ENCODE measurements at regions of chr3 and their contacts with region 1.

Region 1: GRCh38 chr3:136752422-136753325 is 496 bp upstream of the STAG1 start:
- DNase-seq: peak; percentile 99
- ATAC-seq: peak; percentile 90
- H3K4me3 Mint-ChIP-seq: peak overlapping the region; percentile 73
- H3K27ac Mint-ChIP-seq: peak overlapping the region; percentile 86
- H3K4me1 Mint-ChIP-seq: peaks cover 36% of the 10 kb centered on the region
- H3K27me3 Mint-ChIP-seq: no peaks in the 10 kb centered on the region

Region 2: GRCh38 chr3:135655328-135655727 is 1097.3 kb before region 1 on chr3:
- CTCF ChIA-PET with region 1: no interaction called
- POLR2A ChIA-PET with region 1: no interaction called
- DNase-seq: no peak
- ATAC-seq: no peak
- H3K4me3 Mint-ChIP-seq: no peak overlapping the region
- H3K27ac Mint-ChIP-seq: no peak overlapping the region
- H3K4me1 Mint-ChIP-seq: no peaks in the 10 kb centered on the region
- H3K27me3 Mint-ChIP-seq: no peaks in the 10 kb centered on the region

Region 3: DNA sequence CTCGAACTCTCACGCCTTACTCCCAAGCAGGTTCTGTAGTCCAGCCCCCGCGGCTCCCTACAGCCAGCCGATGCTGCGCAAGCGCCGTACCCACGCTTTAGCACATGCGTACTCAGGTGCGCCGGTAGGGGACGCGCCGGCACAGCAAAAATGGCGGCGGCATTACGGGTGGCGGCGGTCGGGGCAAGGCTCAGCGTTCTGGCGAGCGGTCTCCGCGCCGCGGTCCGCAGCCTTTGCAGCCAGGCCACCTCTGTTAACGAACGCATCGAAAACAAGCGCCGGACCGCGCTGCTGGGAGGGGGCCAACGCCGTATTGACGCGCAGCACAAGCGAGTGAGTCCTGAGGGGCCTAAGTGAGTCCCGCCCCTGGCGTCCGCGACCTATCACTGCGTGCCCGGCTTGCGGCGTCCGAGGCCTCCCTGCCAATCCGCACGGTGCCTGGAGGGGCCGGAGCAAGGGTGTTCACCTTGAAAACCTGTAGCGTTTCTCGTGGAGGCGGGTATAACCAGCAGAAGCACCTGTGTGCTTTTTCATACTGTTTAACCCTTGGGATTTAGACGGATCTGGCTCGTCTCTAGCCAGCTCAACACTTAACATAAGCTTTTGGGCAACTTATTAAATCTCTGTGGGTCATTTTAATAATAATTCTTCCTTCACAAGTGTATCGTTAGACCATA is 502.3 kb before region 1 on chr3 and contains the start of gene PCCB:
- CTCF ChIA-PET with region 1: interaction called, 11 read pairs
- POLR2A ChIA-PET with region 1: interaction called, 3 read pairs
- DNase-seq: peak; percentile 95
- ATAC-seq: peak; percentile 100
- H3K4me3 Mint-ChIP-seq: peak within 1 kb of the TSS; percentile 91
- H3K27ac Mint-ChIP-seq: peak within 1 kb of the TSS; percentile 94
- H3K4me1 Mint-ChIP-seq: peaks cover 26% of the 10 kb centered on the region
- H3K27me3 Mint-ChIP-seq: no peaks in the 10 kb centered on the region
- total RNA-seq, gene PCCB: 22.5 to 23.7 TPM

Region 4: GRCh38 chr3:136385457-136385856 is 367.2 kb before region 1 on chr3:
- CTCF ChIA-PET with region 1: interaction called, 46 read pairs
- POLR2A ChIA-PET with region 1: no interaction called
- DNase-seq: no peak
- ATAC-seq: peak; percentile 33
- H3K4me3 Mint-ChIP-seq: no peak overlapping the region
- H3K27ac Mint-ChIP-seq: peak overlapping the region; percentile 20
- H3K4me1 Mint-ChIP-seq: peaks cover 4% of the 10 kb centered on the region
- H3K27me3 Mint-ChIP-seq: no peaks in the 10 kb centered on the region

Region 5: GRCh38 chr3:136630915-136631314 is 121.8 kb before region 1 on chr3:
- CTCF ChIA-PET with region 1: no interaction called
- POLR2A ChIA-PET with region 1: no interaction called
- DNase-seq: no peak
- ATAC-seq: no peak
- H3K4me3 Mint-ChIP-seq: no peak overlapping the region
- H3K27ac Mint-ChIP-seq: no peak overlapping the region
- H3K4me1 Mint-ChIP-seq: no peaks in the 10 kb centered on the region
- H3K27me3 Mint-ChIP-seq: no peaks in the 10 kb centered on the region

Region 6: DNA sequence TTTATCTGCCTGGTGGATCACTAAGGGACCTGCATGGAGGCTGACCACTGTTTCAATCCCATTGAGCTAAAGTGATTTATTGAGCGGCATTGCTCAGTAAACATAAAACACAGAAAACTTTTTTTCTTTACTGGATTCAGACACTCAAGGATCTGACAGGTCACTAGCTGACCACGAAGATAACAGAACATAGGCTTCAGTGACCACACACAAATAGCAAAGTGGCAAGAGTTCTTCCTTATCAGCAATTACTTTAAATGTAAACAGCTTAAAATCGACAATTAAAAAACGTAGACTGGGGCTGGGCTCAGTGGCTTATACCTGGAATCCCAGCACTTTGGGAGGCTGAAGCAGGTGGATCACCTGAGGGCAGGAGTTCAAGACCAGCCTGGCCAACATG is 49.2 kb before region 1 on chr3:
- CTCF ChIA-PET with region 1: interaction called, 13 read pairs
- POLR2A ChIA-PET with region 1: no interaction called
- DNase-seq: no peak
- ATAC-seq: no peak
- H3K4me3 Mint-ChIP-seq: no peak overlapping the region
- H3K27ac Mint-ChIP-seq: no peak overlapping the region
- H3K4me1 Mint-ChIP-seq: peaks cover 1% of the 10 kb centered on the region
- H3K27me3 Mint-ChIP-seq: no peaks in the 10 kb centered on the region

Region 7: GRCh38 chr3:136861890-136862616 is 109.4 kb after region 1 on chr3 and contains the start of gene NCK1:
- CTCF ChIA-PET with region 1: interaction called, 57 read pairs
- POLR2A ChIA-PET with region 1: interaction called, 68 read pairs
- DNase-seq: peak; percentile 99
- ATAC-seq: peak; percentile 99
- H3K4me3 Mint-ChIP-seq: peak within 1 kb of the TSS; percentile 92
- H3K27ac Mint-ChIP-seq: peak within 1 kb of the TSS; percentile 96
- H3K4me1 Mint-ChIP-seq: peaks cover 49% of the 10 kb centered on the region
- H3K27me3 Mint-ChIP-seq: no peaks in the 10 kb centered on the region
- total RNA-seq, gene NCK1: 36.3 to 39.1 TPM

Region 8: GRCh38 chr3:137032465-137033120 is 279.9 kb after region 1 on chr3:
- CTCF ChIA-PET with region 1: interaction called, 10 read pairs
- POLR2A ChIA-PET with region 1: no interaction called
- DNase-seq: peak; percentile 86
- ATAC-seq: peak; percentile 85
- H3K4me3 Mint-ChIP-seq: peak overlapping the region; percentile 60
- H3K27ac Mint-ChIP-seq: no peak overlapping the region
- H3K4me1 Mint-ChIP-seq: peaks cover 10% of the 10 kb centered on the region
- H3K27me3 Mint-ChIP-seq: peaks cover 28% of the 10 kb centered on the region